Cardiac septum (tissue), 1 donor: ENCODE measurements at regions of chr17 and their contacts with region 1.

Region 1: GRCh38 chr17:82494236-82495055 is 25.1 kb upstream of the FOXK2 start:
- DNase-seq: peak; percentile 95

Region 2: DNA sequence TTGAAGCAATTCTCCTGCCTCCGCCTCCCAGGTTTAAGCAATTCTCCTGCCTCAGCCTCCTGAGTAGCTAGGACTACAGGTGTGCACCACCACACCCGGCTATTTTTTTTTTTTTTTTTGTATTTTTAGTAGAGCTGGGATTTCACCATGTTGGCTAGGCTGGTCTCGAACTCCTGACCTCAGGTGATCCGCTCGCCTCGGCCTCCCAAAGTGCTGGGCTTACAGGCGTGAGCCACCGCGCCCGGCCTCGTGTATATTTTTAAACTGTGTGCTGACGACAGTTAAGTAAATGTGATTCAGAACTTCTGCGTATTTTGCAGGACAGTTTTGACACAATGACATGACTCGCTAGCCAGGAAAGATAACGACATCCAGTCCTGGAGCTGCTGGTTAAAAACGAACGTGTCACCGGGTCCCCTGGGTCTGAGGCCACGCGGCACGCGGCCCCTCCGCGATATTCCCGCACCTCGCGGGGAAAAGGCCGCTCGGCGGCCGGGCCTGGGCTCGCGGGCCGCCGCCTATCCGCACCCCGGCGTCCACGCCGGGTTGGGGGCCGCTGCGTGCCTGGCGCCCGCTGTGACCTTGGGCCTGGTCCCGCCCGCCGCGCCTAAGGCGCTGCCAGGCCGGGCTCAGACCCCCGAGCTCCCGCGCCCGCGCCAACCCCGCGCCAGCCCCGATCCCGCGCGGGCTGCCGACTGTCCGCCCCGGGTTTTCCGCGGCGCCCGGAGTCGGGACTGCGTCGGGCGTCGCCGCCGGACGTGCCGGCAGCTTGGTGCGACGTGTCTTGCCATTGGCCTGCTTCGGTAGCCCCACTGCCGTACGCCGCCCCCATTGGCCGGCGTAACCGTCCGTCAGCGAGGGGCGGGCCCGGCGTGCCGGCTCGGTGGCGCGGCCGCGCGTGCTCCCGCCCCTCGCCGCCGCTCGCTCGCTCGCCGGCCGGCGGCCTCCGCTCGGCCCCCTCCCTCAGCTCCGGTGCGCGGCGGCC is 24.7 kb after region 1 on chr17 and contains the start of gene FOXK2:
- intact Hi-C with region 1: loop called (anchors 1 kb)
- DNase-seq: peak; percentile 96
- total RNA-seq, gene FOXK2: 40.2 TPM

Region 3: GRCh38 chr17:82551779-82552457 is 57.5 kb after region 1 on chr17:
- intact Hi-C with region 1: loop called (anchors 5 kb)
- DNase-seq: peak; percentile 89